Activated CD4-positive, alpha-beta memory T cell treated with anti-CD3 and anti-CD28 coated beads for 36 hours (primary cell): ENCODE measurements at regions of chr19 and their contacts with region 1.

Region 1: DNA sequence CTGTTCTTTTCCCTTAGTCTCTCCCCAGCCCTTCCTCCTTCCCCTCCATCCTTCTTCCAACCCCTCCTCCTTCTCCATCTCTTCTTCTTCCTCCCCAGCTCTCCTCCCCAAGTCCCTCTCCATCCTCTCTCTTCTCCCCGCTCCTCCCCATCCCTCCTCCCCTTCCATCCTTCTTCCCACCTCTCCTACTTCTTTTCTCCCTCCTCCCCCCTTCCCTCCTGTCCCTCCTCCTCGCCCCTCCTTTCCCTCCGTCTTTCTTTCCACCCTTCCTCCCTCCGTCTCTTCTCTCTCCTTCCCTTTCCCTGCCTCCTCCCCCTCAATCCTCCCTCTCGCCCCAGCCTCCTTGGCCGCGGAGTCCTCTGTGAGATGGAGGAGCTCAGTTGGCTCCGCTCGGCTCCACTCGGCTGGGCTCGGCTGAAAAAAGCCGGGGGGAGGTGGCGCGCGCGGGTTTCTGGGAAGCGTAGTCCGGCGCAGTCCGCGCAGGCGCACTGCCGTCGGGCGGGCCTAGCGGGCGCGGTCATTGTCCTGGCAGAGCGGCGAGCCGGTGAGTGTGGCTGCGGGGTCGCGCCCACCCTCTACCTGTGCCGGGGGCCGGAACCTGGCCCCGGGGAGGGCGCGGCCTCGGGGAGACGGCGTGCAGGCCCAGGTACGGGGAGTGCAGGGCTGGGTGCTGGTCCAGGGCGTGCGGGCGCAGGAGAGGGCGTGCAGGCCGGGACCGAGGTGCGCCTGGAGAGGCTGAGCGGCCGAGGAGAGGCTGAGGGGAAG is at the start of gene ZNF71:
- DNase-seq: peak; percentile 92
- H3K4me3 Mint-ChIP-seq: peak within 1 kb of the TSS; percentile 80
- H3K27ac Mint-ChIP-seq: peak within 1 kb of the TSS; percentile 39
- H3K4me1 Mint-ChIP-seq: peaks cover 19% of the 10 kb centered on the region
- H3K27me3 Mint-ChIP-seq: no peaks in the 10 kb centered on the region
- total RNA-seq, gene ZNF71: 2.7 to 3.1 TPM

Region 2: DNA sequence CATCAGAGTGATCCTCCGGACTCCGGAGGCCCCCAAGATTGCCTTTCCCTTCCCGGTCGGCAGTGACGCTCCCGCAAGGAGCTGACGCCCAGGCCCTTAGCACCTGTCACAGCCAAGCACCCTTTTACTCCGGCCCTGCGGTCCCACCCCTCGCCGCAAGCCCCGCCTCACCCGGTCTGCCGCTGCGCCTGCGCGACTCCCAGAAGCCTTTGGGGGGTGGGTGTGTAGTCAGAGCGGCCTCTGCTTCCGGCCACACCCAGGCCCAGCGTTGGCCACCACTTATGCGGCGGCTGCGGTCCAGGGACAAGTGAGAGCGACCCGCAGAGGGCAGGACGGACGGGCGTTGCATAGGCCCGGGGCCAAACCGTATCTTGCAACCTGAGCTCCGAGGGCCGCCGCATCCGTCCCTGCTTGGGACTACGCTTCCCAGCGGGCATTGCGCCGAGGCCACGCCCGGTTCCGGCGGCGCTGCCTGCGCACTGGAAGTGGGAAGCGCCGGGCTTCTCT is 56.7 kb before region 1 on chr19:
- CTCF ChIA-PET with region 1: no interaction called
- POLR2A ChIA-PET with region 1: no interaction called
- intact Hi-C with region 1: loop called (anchors 1 kb)
- DNase-seq: peak; percentile 92
- H3K4me3 Mint-ChIP-seq: peak overlapping the region; percentile 78
- H3K27ac Mint-ChIP-seq: peak overlapping the region; percentile 86
- H3K4me1 Mint-ChIP-seq: peaks cover 15% of the 10 kb centered on the region
- H3K27me3 Mint-ChIP-seq: peaks cover 6% of the 10 kb centered on the region

Region 3: GRCh38 chr19:56645003-56645402 is 50.0 kb after region 1 on chr19:
- CTCF ChIA-PET with region 1: no interaction called
- POLR2A ChIA-PET with region 1: no interaction called
- intact Hi-C with region 1: no loop called
- DNase-seq: no peak
- H3K4me3 Mint-ChIP-seq: no peak overlapping the region
- H3K27ac Mint-ChIP-seq: no peak overlapping the region
- H3K4me1 Mint-ChIP-seq: no peaks in the 10 kb centered on the region
- H3K27me3 Mint-ChIP-seq: peaks cover 9% of the 10 kb centered on the region

Region 4: DNA sequence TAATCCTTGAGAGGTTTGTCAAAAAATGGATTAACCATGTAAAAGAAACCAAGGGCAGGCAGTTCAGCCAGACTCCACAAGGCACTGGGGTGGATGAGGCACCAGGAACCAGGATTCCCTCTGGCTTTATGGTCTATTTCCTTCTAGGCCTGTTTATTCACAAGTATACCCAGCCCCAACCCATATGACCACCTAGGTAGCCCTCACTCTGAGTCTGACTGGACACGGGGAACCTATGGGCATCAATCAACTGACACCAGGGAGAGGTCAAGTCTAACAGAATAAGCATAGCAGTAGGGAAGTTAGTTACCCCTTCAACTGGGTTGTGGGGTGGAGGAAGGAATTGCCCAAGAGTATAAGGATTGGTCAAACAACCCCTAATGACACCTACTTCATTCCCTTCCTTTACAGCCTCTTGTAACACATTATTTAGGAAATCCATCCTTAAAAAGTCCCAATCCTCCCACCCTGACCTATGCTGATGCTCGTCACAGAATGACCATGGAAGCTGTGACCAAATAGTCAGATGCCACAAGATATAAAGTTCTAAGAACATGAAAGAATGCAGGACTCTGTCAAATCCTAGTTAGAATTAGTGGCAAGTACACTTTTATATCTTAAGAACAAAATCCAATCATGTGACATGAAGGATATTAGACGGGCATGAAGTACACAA is 213.9 kb after region 1 on chr19:
- CTCF ChIA-PET with region 1: no interaction called
- POLR2A ChIA-PET with region 1: no interaction called
- intact Hi-C with region 1: no loop called
- DNase-seq: no peak
- H3K4me3 Mint-ChIP-seq: no peak overlapping the region
- H3K27ac Mint-ChIP-seq: no peak overlapping the region
- H3K4me1 Mint-ChIP-seq: no peaks in the 10 kb centered on the region
- H3K27me3 Mint-ChIP-seq: no peaks in the 10 kb centered on the region